ENCODE measurements at regions of chr12 and their contacts with region 1.

Region 1: GRCh38 chr12:55320201-55320600 is 6.1 kb downstream of the OR6C1 start:
- DNase-seq: no peak

Region 2: GRCh38 chr12:55126106-55126505 is 194.1 kb before region 1 on chr12 and contains the start of gene OR9K2:
- in situ Hi-C with region 1: no loop called
- DNase-seq: no peak
- total RNA-seq, gene OR9K2: not detected in 2 replicates

Region 3: GRCh38 chr12:55289999-55290398 is 30.2 kb before region 1 on chr12:
- in situ Hi-C with region 1: loop called (anchors 5 kb)
- DNase-seq: no peak